ENCODE measurements at regions of chr7 and their contacts with region 1.

Region 1: DNA sequence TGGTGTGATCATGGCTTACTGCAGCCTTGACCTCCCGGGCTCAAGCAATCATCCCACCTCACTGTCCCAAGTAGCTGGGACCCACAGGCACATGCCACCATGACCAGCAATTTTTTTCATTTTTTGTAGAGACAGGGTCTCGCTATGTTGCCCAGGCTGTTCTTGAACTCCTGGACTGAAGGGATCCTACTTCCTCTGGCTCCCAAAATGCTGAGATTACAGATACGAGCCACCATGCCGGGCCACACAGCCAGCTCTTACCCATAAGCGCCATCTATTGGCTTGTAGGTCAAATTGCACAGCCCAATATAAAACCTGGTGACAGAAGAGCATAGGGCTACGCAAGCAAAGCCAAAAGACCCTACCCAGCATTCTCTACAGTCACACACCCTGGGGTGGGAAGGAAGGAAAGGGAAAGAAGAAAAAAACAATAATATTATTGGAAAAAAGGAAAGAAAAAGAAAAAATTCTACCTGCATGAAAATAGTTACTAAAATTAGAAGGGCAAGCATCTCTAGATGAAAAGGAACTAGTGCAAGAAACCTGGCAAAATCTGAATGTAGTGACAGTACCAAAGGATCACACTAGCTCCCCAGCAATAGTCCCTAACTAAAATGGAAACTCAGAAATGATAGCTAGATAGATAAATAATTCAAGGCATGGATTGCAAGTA is 29.4 kb upstream of the AMPH start:
- DNase-seq: peak in 2 of 9 experiments; percentile 48 to 58
- ATAC-seq: peak; percentile 58
- H3K4me3 ChIP-seq: no peak overlapping the region
- H3K4me3 Mint-ChIP-seq: no peak overlapping the region
- H3K27ac ChIP-seq: no peak overlapping the region
- H3K27ac Mint-ChIP-seq: no peak overlapping the region
- H3K4me1 ChIP-seq: no peaks in the 10 kb centered on the region
- H3K4me1 Mint-ChIP-seq: no peaks in the 10 kb centered on the region
- H3K27me3 ChIP-seq: no peaks in the 10 kb centered on the region
- H3K27me3 Mint-ChIP-seq: peaks cover 16% of the 10 kb centered on the region
- CTCF ChIP-seq: peak; percentile 65

Region 2: GRCh38 chr7:38107486-38107893 is 553.1 kb before region 1 on chr7:
- CTCF ChIA-PET with region 1: no interaction called
- POLR2A ChIA-PET with region 1: no interaction called
- intact Hi-C with region 1: loop called (anchors 2 to 10 kb)
- DNase-seq: peak; percentile 33 to 80 (median 71)
- ATAC-seq: peak; percentile 87
- H3K4me3 ChIP-seq: no peak overlapping the region
- H3K4me3 Mint-ChIP-seq: no peak overlapping the region
- H3K27ac ChIP-seq: no peak overlapping the region
- H3K27ac Mint-ChIP-seq: no peak overlapping the region
- H3K4me1 ChIP-seq: no peaks in the 10 kb centered on the region
- H3K4me1 Mint-ChIP-seq: peaks cover 2% of the 10 kb centered on the region
- H3K27me3 ChIP-seq: peaks cover 0 to 2% of the 10 kb centered on the region in 2 experiments
- H3K27me3 Mint-ChIP-seq: peaks cover 8% of the 10 kb centered on the region
- CTCF ChIP-seq: peak; percentile 89